H1 (cell line): ENCODE measurements at regions of chr1 and their contacts with region 1.

Region 1: DNA sequence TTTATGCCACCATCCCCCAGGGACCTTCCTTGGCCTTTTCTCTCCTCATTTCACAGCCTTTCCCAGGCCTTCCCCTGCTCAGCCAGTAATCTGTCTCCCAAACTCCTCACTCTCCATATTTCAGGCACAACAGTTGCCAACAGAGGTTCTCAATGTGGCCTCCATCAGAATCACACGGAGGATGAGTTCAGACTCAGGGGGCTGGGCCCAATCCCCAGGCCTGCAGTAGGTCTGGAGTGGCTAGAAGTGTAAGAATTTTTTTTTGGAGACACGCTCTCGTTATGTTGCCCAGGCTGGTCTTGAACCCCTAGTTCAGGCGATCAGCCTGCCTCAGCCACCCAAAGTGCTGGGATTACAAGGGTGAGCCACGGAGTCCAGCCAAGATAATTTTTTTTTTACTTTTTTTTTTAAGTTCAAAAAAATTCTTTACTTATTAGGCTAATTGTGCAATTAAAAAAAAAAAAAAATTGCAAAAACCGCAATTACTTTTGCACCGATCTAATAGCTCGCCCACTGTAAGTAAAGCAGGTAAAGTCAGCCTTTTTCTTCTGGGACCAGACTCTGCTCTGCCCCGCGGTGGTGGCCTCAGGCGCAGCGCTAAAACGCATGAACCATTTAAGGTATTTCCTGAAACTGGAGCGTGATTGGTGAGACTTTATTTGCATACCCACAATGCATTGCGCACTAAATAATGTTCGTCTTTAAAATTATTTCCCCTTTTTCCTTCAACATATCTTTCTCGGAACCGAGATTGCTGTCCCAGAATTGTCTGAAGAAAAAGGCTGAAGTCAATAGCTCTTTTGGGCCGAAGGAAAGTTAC is 18.7 kb downstream of the KIAA2013 start:
- DNase-seq: peak; percentile 96
- H3K4me3 ChIP-seq: peak overlapping the region in 2 of 4 experiments; percentile 25 to 61; a peak in 2 of 8 replicates
- H3K27ac ChIP-seq: peak overlapping the region; percentile 100
- H3K4me1 ChIP-seq: peaks cover 0 to 4% (median 1%) of the 10 kb centered on the region in 4 experiments; a peak in 3 of 7 replicates
- H3K27me3 ChIP-seq: no peaks in the 10 kb centered on the region
- CTCF ChIP-seq: peak; percentile 74 to 89 (median 75)
- EP300 ChIP-seq: no peak
- POLR2A ChIP-seq: no peak
- RAD21 ChIP-seq: peak; percentile 63 to 64

Region 2: DNA sequence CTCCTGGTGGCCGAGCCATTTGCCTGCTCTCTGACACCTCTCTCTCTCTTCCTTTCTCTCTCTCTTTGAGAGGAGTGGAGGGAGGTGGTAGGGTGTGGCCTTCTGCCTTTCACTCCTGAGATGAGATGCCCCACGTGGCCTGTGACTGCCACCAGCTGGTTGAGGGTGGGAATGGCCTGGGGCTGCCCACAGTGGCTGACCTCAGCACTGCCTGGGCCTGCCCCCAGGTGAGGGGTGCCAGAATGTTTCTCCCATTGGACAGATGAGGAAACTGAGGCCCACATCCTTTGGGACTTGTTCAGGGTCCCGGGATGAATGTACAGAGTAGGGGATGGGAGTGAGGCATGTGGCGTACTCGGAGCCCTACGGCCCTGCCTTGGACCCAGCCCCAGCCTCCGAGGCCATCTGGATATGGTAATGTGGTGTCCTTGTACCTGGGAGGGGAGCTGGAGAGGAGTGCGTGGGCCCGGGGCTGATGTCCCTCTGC is 158.2 kb before region 1 on chr1:
- CTCF ChIA-PET with region 1: no interaction called
- POLR2A ChIA-PET with region 1: interaction called, 12 read pairs
- DNase-seq: peak in 1 of 2 experiments; percentile 72
- H3K4me3 ChIP-seq: no peak overlapping the region
- H3K27ac ChIP-seq: no peak overlapping the region
- H3K4me1 ChIP-seq: peaks cover 0 to 16% (median 5%) of the 10 kb centered on the region in 4 experiments; a peak in 5 of 7 replicates
- H3K27me3 ChIP-seq: no peaks in the 10 kb centered on the region
- CTCF ChIP-seq: peak; percentile 68 to 89 (median 77)
- EP300 ChIP-seq: no peak
- POLR2A ChIP-seq: no peak
- RAD21 ChIP-seq: peak; percentile 83 to 86

Region 3: GRCh38 chr1:11796036-11796828 is 111.3 kb before region 1 on chr1:
- CTCF ChIA-PET with region 1: no interaction called
- POLR2A ChIA-PET with region 1: no interaction called
- DNase-seq: no peak
- H3K4me3 ChIP-seq: no peak overlapping the region
- H3K27ac ChIP-seq: no peak overlapping the region
- H3K4me1 ChIP-seq: no peaks in the 10 kb centered on the region
- H3K27me3 ChIP-seq: no peaks in the 10 kb centered on the region
- CTCF ChIP-seq: no peak
- EP300 ChIP-seq: no peak
- POLR2A ChIP-seq: no peak
- RAD21 ChIP-seq: no peak

Region 4: DNA sequence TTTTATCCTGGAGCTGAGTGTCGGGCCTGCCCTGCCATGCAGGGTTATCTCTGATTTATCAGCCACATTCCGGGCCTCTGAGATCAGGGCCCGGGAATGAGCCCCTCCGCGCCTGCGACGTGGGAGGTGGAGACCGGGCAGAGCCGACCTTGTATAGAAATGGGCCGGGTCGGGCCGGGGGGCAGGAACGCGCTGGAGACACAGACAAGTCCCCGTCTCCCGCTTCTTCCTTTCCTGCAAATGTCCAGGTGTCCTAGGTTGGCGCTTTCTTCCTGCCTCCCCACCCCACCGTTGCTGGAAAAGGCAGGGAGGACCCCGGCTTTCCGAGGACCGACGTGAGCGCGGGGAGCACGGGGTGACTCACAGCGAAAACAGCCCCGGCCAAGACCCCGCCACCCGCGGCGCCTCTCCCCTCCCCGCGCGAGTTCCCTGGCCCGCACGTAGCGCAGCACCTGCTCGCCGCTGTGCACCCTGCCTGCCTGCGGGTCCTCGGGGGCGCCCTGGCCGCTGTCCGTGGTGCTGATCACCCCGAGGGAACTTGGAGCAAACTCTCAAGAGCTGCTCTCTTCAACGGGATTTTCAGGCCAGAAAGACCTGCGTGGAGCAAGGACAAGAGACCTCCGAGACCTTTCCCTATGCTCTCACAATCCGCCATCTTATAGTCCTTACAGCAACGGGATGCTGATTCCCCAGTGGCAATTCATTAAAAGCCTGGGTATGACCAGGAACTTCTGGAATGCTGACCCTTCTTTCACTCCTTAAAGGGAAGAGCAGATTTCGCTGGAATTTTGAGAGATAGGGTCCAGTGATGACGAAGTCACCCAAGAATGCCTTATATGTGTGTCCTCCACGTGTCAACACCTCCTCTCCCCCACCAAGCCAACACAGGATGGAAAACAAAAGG is 48.3 kb before region 1 on chr1:
- CTCF ChIA-PET with region 1: interaction called, 4 read pairs
- POLR2A ChIA-PET with region 1: interaction called, 81 read pairs
- DNase-seq: peak in 1 of 2 experiments; percentile 94
- H3K4me3 ChIP-seq: peak overlapping the region in 3 of 4 experiments; percentile 3 to 51 (median 14); a peak in 4 of 8 replicates
- H3K27ac ChIP-seq: no peak overlapping the region
- H3K4me1 ChIP-seq: peaks cover 0 to 3% (median 1%) of the 10 kb centered on the region in 4 experiments; a peak in 1 of 7 replicates
- H3K27me3 ChIP-seq: peaks cover 0 to 22% (median 13%) of the 10 kb centered on the region in 4 experiments; a peak in 6 of 7 replicates
- CTCF ChIP-seq: peak; percentile 39 to 52 (median 42)
- EP300 ChIP-seq: no peak
- POLR2A ChIP-seq: no peak
- RAD21 ChIP-seq: peak in 1 of 2 experiments; percentile 9; a peak in 2 of 4 replicates

Region 5: DNA sequence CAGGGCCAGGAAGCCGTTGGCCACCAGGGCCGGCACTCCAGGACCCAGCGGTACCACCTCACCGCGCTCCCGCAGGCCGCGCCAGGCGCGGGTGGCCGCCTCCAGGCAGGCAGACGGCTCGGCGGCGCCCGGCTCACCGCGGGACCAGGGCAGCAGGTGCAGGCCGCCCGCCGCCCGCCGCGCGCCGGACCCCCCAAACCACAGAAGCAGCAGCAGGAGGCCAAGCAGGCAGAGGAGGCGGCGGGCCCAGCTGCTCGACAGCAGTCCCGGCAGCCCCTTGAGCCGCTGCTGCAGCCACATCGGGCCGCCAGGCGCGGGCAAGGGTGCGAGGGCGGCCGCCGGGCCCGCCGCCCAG is 18.4 kb after region 1 on chr1:
- CTCF ChIA-PET with region 1: interaction called, 3 read pairs
- POLR2A ChIA-PET with region 1: interaction called, 263 read pairs
- DNase-seq: peak in 1 of 2 experiments; percentile 57
- H3K4me3 ChIP-seq: peak overlapping the region; percentile 45 to 53 (median 48)
- H3K27ac ChIP-seq: no peak overlapping the region
- H3K4me1 ChIP-seq: peaks cover 5 to 8% (median 6%) of the 10 kb centered on the region in 4 experiments; a peak in 5 of 7 replicates
- H3K27me3 ChIP-seq: no peaks in the 10 kb centered on the region
- CTCF ChIP-seq: no peak
- EP300 ChIP-seq: no peak
- POLR2A ChIP-seq: no peak
- RAD21 ChIP-seq: no peak

Region 6: GRCh38 chr1:11967028-11967547 is 59.6 kb after region 1 on chr1:
- CTCF ChIA-PET with region 1: interaction called, 32 read pairs
- POLR2A ChIA-PET with region 1: interaction called, 220 read pairs
- DNase-seq: peak; percentile 64 to 76
- H3K4me3 ChIP-seq: no peak overlapping the region
- H3K27ac ChIP-seq: no peak overlapping the region
- H3K4me1 ChIP-seq: no peaks in the 10 kb centered on the region
- H3K27me3 ChIP-seq: no peaks in the 10 kb centered on the region
- CTCF ChIP-seq: peak; percentile 68 to 98 (median 95)
- EP300 ChIP-seq: no peak
- POLR2A ChIP-seq: no peak
- RAD21 ChIP-seq: peak; percentile 95

Region 7: GRCh38 chr1:12040457-12041051 is 133.1 kb after region 1 on chr1:
- CTCF ChIA-PET with region 1: no interaction called
- POLR2A ChIA-PET with region 1: interaction called, 10 read pairs
- DNase-seq: no peak
- H3K4me3 ChIP-seq: no peak overlapping the region
- H3K27ac ChIP-seq: no peak overlapping the region
- H3K4me1 ChIP-seq: no peaks in the 10 kb centered on the region; a peak in 1 of 7 replicates
- H3K27me3 ChIP-seq: no peaks in the 10 kb centered on the region
- CTCF ChIP-seq: no peak
- EP300 ChIP-seq: no peak
- POLR2A ChIP-seq: no peak
- RAD21 ChIP-seq: no peak

Region 8: DNA sequence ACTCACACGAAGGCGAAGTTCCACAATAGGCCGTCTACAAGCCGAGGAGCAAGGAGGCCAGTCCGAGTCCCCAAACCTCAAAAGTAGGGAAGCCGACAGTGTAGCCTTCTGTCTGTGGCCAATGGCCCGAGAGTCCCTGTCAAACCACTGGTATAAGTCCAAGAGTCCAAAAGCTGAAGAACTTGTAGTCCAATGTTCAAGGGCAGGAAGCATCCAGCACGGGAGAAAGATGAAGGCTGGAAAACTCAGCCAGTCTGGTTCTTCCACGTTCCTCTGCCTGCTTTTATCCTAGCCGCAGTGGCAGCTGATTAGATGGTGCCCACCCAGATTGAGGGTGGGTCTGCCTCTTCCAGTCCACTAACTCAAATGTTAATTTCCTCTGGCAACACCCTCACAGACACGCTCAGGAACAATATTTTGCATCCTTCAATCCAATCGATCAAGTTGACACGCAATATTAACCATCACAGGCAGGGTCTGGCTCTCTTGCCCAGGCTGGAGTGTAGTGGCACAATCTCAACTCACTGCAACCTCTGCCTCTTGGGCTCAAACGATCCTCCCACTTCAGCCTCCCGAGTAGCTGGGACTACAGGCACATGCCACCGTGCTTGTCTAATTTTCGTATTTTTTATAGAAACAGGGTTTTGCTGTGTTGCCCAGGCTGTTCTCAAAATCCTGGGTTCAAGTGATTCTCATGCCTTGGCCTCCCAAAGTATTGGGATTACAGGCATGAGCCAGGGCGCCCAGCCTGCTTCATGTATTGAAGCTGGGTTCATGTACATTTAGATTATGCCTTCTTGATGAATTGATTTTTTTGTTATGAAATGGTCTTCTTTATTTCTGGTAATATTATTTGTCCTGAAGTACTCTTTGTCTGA is 625.2 kb after region 1 on chr1:
- CTCF ChIA-PET with region 1: no interaction called
- POLR2A ChIA-PET with region 1: no interaction called
- DNase-seq: no peak
- H3K4me3 ChIP-seq: no peak overlapping the region
- H3K27ac ChIP-seq: no peak overlapping the region
- H3K4me1 ChIP-seq: no peaks in the 10 kb centered on the region; a peak in 3 of 7 replicates
- H3K27me3 ChIP-seq: no peaks in the 10 kb centered on the region
- CTCF ChIP-seq: no peak
- EP300 ChIP-seq: no peak
- POLR2A ChIP-seq: no peak
- RAD21 ChIP-seq: no peak